OCI-LY7 (cell line): ENCODE measurements at regions of chr1 and their contacts with region 1.

Region 1: GRCh38 chr1:160006312-160006940 is 25.4 kb downstream of the PIGM start:
- DNase-seq: peak; percentile 80
- H3K4me3 ChIP-seq: no peak overlapping the region
- H3K27ac ChIP-seq: no peak overlapping the region
- H3K4me1 ChIP-seq: no peaks in the 10 kb centered on the region
- CTCF ChIP-seq: peak; percentile 97

Region 2: GRCh38 chr1:159780583-159781582 is 225.5 kb before region 1 on chr1 and contains the start of gene DUSP23:
- CTCF ChIA-PET with region 1: no interaction called
- POLR2A ChIA-PET with region 1: no interaction called
- intact Hi-C with region 1: loop called (anchors 1 kb)
- DNase-seq: peak; percentile 49
- H3K4me3 ChIP-seq: peak within 1 kb of the TSS; percentile 31
- H3K27ac ChIP-seq: no peak within 1 kb of the TSS
- H3K4me1 ChIP-seq: no peaks in the 10 kb centered on the region
- CTCF ChIP-seq: peak; percentile 75
- total RNA-seq, gene DUSP23: 1.2 and 3.7 TPM in 2 replicates

Region 3: GRCh38 chr1:159798893-159799292 is 207.5 kb before region 1 on chr1:
- CTCF ChIA-PET with region 1: interaction called, 3 read pairs
- POLR2A ChIA-PET with region 1: no interaction called
- intact Hi-C with region 1: loop called (anchors 1 kb)
- DNase-seq: peak; percentile 50
- H3K4me3 ChIP-seq: no peak overlapping the region
- H3K27ac ChIP-seq: no peak overlapping the region
- H3K4me1 ChIP-seq: no peaks in the 10 kb centered on the region
- CTCF ChIP-seq: peak; percentile 84

Region 4: GRCh38 chr1:159936273-159936904 is 70.0 kb before region 1 on chr1:
- CTCF ChIA-PET with region 1: interaction called, 6 read pairs
- POLR2A ChIA-PET with region 1: no interaction called
- intact Hi-C with region 1: loop called (anchors 1 kb)
- DNase-seq: peak; percentile 60
- H3K4me3 ChIP-seq: no peak overlapping the region
- H3K27ac ChIP-seq: no peak overlapping the region
- H3K4me1 ChIP-seq: peaks cover 8% of the 10 kb centered on the region
- CTCF ChIP-seq: peak; percentile 83

Region 5: GRCh38 chr1:160031365-160032164 is 25.1 kb after region 1 on chr1 and contains the start of gene PIGM:
- CTCF ChIA-PET with region 1: interaction called, 10 read pairs
- POLR2A ChIA-PET with region 1: interaction called, 4 read pairs
- intact Hi-C with region 1: no loop called
- DNase-seq: peak; percentile 97
- H3K4me3 ChIP-seq: peak within 1 kb of the TSS; percentile 74
- H3K27ac ChIP-seq: peak within 1 kb of the TSS; percentile 46
- H3K4me1 ChIP-seq: peaks cover 24% of the 10 kb centered on the region
- CTCF ChIP-seq: no peak
- total RNA-seq, gene PIGM: 4.1 and 4.2 TPM in 2 replicates